Adrenal gland (tissue), 19 donors: ENCODE measurements at regions of chr20 and their contacts with region 1.

Region 1: DNA sequence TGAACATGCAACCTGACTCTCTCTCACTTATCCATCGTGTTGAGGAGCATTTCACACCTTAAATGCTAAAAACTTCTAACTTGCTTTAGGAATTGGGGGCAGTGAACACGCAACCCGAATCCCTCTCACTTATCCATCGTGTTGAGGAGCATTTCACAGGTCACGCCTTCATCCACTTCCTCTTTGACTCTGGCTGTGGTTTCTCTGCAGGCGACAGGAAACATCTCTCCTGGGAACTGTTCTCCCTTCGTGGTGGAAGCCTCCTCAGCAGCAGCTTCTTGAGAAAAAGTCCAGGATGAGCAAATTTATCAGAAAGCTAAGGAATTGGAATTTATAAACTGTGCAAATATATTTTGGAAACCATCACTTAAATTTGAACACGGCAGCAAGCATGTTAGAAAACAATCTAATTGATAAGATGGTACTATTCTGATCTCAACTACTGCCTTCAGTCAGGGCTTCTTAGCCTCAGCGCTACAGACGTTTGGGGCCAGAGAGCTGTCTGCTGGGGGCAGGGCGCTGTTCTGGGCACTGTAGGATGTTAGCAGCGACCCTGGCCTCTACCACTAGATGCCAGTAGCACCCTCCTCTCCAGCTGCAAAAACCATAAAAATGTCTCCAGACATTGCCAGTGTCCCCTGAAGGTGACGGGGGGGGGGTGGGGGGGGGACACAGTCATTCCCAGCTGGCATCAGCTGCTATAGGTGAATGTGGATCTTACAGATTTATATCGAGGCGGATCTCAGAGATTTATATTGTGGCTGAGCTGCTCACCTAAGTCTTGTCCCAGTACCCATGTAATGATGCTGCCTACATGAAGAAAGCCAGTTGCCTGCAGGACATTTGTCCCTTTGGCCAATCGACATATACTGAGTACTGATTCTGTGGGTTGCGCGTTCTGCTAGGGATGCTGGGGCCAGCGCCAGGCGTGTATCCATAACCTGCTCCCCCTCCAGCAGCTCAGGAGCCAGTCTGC is 26.2 kb downstream of the CTCFL start:
- DNase-seq: peak in 1 of 7 donors; percentile 21
- H3K4me3 ChIP-seq: no peak overlapping the region
- H3K27ac ChIP-seq: no peak overlapping the region
- H3K4me1 ChIP-seq: peaks cover 0 to 6% of the 10 kb centered on the region in 2 donors
- H3K27me3 ChIP-seq: peaks cover 18% of the 10 kb centered on the region
- CTCF ChIP-seq: peak in 2 of 6 experiments; percentile 4 to 17
- POLR2A ChIP-seq: no peak

Region 2: DNA sequence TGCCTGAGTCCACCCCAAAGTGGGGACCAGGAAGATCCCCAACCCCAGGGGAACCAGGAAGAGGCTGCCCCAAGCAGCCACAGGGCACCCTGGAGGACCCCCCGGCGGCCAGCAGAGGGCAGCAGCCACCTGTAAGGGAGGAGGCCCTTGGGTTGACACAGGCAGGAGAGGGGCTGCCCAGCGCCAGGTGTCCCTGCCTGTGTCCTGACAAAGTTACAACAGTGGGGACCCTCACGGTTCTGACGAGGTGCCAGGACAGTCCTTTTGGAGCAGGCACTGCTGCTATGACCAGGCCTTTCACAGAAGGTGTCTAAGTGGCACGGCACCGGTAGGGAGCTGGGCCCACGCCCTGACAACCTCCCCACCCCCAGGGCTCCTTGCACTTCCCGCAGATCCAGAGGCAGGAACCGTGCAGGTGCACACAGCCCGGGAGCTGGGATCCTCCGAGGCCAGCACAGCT is 409.0 kb before region 1 on chr20:
- intact Hi-C with region 1: loop called in 1 of 2 experiments (anchors 10 kb)
- DNase-seq: peak; percentile 46 to 77 (median 63)
- H3K4me3 ChIP-seq: no peak overlapping the region
- H3K27ac ChIP-seq: no peak overlapping the region
- H3K4me1 ChIP-seq: no peaks in the 10 kb centered on the region
- H3K27me3 ChIP-seq: peaks cover 11% of the 10 kb centered on the region
- CTCF ChIP-seq: peak; percentile 61 to 80 (median 70)
- POLR2A ChIP-seq: no peak

Region 3: GRCh38 chr20:57266291-57267157 is 232.2 kb before region 1 on chr20 and contains the start of gene BMP7:
- intact Hi-C with region 1: no loop called
- DNase-seq: no peak
- H3K4me3 ChIP-seq: no peak within 1 kb of the TSS
- H3K27ac ChIP-seq: no peak within 1 kb of the TSS
- H3K4me1 ChIP-seq: no peaks in the 10 kb centered on the region
- H3K27me3 ChIP-seq: peaks cover 56% of the 10 kb centered on the region
- CTCF ChIP-seq: no peak
- POLR2A ChIP-seq: no peak
- total RNA-seq, gene BMP7: 0.74 to 6.7 (median 2.2) TPM in 6 of 9 donors, not detected in the others

Region 4: DNA sequence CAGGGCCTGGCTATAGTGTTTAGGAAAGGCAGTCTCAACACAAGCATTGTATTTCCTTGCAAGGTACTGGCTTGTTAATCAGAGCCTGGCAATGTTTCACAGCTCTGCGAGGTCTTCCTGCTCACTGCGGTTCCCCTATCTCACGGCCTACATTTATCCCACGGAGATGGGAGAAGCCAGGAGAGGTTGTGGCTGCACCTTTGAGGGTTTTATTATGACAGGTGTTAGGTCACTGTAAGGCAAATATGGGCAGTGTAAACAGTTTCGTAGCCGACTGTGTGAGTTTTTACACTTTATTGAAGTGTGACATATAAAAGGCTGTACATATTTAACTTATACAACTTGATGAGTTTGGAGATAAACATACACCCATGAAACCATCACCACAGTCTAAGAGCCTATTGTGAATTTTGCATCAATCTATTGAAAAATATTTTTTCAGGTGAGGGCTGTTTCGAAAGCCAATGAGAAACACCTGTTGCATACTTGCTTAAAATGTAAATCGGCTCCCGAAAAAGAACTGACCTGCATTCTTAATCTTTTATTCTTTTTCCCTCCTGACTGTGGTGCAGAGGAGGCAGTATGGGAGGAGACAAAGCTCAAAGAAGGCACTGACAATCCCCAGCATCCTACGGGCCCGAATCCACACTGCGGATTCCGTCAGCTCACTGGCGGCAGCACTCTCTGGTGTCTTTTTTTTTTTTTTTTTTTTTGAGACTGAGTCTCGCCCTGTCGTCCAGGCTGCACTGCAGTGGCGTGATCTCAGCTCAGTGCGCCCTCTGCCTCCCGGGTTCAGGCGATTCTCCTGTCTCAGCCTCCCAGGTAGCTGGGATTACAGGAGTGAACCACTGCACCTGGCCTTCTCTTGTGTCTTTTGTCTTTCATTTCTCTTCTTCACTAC is 115.0 kb before region 1 on chr20:
- intact Hi-C with region 1: loop called (anchors 2 to 5 kb)
- DNase-seq: peak in 1 of 7 donors; percentile 5
- H3K4me3 ChIP-seq: no peak overlapping the region
- H3K27ac ChIP-seq: no peak overlapping the region
- H3K4me1 ChIP-seq: peaks cover 6 to 7% of the 10 kb centered on the region in 2 donors
- H3K27me3 ChIP-seq: no peaks in the 10 kb centered on the region
- CTCF ChIP-seq: no peak
- POLR2A ChIP-seq: no peak